ENCODE measurements at regions of chr1 and their contacts with region 1.

Region 1: DNA sequence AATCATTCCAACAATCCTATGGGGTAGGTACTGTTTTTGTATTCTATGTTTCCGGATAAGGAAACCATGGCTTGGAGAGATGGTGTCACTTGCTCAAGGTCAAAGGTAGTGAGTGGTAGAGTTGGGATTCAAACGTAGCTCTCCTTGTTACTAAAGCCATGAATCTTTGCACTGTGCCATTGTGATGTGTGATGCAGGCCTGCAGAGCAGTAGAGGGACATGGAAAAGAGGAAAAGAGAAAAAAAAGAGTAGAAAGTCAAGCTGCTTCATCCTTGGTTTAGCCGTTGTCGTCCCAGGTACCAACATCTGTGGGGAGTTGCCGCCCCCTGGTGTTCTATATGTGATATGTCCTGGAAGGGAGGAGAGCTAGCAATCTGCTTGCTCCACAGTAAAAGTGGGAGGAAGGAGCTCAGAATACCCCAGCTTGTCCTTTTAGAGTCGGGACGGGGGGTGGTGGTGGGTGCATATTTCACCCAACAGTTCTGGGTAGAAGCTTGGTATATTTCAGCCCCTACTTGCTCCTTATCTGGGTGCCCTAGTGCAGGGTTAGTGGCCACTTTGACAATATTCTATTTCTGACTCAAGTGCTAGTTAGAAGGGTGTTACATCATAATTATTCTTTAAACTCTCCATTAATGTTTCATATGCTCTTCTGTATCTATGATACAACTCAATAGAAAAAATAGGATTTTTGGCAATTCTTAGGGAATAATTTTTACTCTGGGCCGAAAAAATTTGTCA is 98.4 kb downstream of the EBNA1BP2 start:
- DNase-seq: peak; percentile 79 to 80
- H3K4me3 ChIP-seq: no peak overlapping the region
- H3K4me3 Mint-ChIP-seq: no peak overlapping the region
- H3K27ac Mint-ChIP-seq: no peak overlapping the region
- H3K4me1 ChIP-seq: peaks cover 52% of the 10 kb centered on the region
- H3K4me1 Mint-ChIP-seq: peaks cover 36% of the 10 kb centered on the region
- H3K27me3 ChIP-seq: no peaks in the 10 kb centered on the region
- H3K27me3 Mint-ChIP-seq: no peaks in the 10 kb centered on the region
- CTCF ChIP-seq: peak; percentile 63 to 83

Region 2: DNA sequence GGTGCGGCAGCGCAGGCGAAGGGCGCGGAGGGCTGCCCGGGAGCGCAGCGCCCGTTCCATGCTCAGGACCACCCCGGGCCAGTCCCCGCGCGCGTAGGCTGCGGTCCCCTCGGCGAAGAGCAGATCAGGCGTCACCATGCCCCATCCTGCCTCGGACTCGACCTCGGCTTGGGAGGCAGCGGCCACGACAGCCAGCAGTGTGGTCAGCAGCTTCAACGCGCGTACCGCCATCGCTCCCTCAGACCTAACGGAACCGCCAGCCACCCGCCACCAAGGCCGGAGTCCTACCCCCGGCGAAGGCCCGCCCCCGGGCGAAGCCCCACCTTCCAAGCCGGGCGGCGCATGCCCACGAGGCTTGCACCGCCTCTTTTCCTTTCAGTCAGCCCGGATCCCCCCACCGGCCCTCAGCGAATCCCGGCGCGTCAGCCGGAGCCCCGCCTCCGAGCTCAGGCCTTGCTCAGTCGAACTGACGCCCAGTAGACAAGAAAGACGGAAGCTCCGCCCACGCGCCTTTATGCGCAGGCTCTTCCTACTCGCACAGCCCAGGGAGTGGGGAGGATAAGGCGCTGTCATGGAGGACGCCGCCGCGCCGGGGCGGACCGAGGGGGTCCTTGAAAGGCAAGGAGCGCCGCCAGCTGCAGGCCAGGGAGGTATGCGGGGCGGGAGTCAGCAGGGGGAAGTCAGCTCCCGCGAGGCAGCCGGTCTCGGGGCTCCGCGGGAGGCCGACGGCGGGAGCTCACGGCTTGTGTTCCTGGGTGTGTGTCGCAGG is 306.7 kb before region 1 on chr1 and contains the starts of genes C1orf50 and P3H1:
- CTCF ChIA-PET with region 1: interaction called, 19 read pairs
- POLR2A ChIA-PET with region 1: no interaction called
- intact Hi-C with region 1: no loop called
- DNase-seq: peak; percentile 98 to 99
- H3K4me3 ChIP-seq: peak within 1 kb of the TSS; percentile 90
- H3K4me3 Mint-ChIP-seq: no peak within 1 kb of the TSS
- H3K27ac Mint-ChIP-seq: peak within 1 kb of the TSS; percentile 80
- H3K4me1 ChIP-seq: peaks cover 13% of the 10 kb centered on the region
- H3K4me1 Mint-ChIP-seq: no peaks in the 10 kb centered on the region
- H3K27me3 ChIP-seq: no peaks in the 10 kb centered on the region
- H3K27me3 Mint-ChIP-seq: no peaks in the 10 kb centered on the region
- CTCF ChIP-seq: no peak
- total RNA-seq, gene C1orf50: 6.1 and 6.3 TPM in 2 replicates
- total RNA-seq, gene P3H1: 20.5 and 21.2 TPM in 2 replicates

Region 3: DNA sequence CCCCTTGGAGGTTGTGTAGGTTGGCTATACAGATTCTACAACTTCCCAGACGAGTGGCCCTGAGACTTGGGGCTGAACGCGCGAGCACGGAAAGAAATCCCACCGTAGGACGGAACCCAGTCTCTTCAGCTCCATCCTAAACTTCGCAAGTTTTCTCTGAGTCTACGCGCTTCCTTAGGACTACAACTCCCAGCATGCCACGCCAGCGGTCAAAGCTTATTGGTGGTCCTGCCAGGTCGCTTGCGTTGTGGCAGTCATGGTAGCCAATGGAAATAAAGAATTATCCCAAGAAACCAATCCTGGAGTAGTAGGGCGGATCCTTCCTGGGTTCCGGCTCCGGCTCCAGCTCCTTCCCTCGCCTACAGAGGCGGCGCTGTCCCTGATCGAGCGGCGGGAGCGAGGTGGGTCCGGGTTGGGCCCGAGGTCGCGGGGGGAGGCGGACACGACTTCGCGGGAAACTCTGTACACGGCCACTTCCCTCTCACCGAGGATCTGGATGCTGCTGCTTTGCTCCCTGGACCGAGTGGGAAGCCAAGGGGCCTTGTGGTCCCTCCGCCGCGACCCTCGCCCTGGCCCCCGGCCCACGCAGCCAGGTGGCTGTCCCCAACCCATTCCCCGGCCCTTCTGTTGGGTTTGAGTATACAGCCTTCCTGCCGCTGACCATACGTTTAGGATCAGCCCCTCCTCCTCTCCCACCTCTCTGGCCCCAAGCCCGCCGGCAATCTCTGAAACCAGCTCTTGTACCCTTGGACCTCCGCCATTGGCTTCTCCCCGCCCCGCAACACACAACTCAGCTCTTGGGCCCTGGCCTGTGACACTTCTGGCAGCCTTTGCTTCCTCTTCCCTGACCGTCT is 227.2 kb before region 1 on chr1 and contains the start of gene ZNF691:
- CTCF ChIA-PET with region 1: interaction called, 19 read pairs
- POLR2A ChIA-PET with region 1: no interaction called
- intact Hi-C with region 1: no loop called
- DNase-seq: peak; percentile 90 to 93
- H3K4me3 ChIP-seq: peak within 1 kb of the TSS; percentile 75
- H3K4me3 Mint-ChIP-seq: peak within 1 kb of the TSS; percentile 100
- H3K27ac Mint-ChIP-seq: peak within 1 kb of the TSS; percentile 94
- H3K4me1 ChIP-seq: no peaks in the 10 kb centered on the region; the same call in 1 of the 2 replicates
- H3K4me1 Mint-ChIP-seq: peaks cover 10% of the 10 kb centered on the region
- H3K27me3 ChIP-seq: no peaks in the 10 kb centered on the region
- H3K27me3 Mint-ChIP-seq: no peaks in the 10 kb centered on the region
- CTCF ChIP-seq: peak in 1 of 2 experiments; percentile 44
- total RNA-seq, gene ZNF691: 6.2 and 7.8 TPM in 2 replicates

Region 4: GRCh38 chr1:42924082-42924850 is 149.4 kb before region 1 on chr1:
- CTCF ChIA-PET with region 1: interaction called, 34 read pairs
- POLR2A ChIA-PET with region 1: interaction called, 3 read pairs
- intact Hi-C with region 1: loop called (anchors 1 kb)
- DNase-seq: peak; percentile 67 to 80
- H3K4me3 ChIP-seq: no peak overlapping the region
- H3K4me3 Mint-ChIP-seq: peak overlapping the region; percentile 51
- H3K27ac Mint-ChIP-seq: peak overlapping the region; percentile 58
- H3K4me1 ChIP-seq: peaks cover 12% of the 10 kb centered on the region
- H3K4me1 Mint-ChIP-seq: peaks cover 40% of the 10 kb centered on the region
- H3K27me3 ChIP-seq: no peaks in the 10 kb centered on the region
- H3K27me3 Mint-ChIP-seq: no peaks in the 10 kb centered on the region
- CTCF ChIP-seq: no peak

Region 5: DNA sequence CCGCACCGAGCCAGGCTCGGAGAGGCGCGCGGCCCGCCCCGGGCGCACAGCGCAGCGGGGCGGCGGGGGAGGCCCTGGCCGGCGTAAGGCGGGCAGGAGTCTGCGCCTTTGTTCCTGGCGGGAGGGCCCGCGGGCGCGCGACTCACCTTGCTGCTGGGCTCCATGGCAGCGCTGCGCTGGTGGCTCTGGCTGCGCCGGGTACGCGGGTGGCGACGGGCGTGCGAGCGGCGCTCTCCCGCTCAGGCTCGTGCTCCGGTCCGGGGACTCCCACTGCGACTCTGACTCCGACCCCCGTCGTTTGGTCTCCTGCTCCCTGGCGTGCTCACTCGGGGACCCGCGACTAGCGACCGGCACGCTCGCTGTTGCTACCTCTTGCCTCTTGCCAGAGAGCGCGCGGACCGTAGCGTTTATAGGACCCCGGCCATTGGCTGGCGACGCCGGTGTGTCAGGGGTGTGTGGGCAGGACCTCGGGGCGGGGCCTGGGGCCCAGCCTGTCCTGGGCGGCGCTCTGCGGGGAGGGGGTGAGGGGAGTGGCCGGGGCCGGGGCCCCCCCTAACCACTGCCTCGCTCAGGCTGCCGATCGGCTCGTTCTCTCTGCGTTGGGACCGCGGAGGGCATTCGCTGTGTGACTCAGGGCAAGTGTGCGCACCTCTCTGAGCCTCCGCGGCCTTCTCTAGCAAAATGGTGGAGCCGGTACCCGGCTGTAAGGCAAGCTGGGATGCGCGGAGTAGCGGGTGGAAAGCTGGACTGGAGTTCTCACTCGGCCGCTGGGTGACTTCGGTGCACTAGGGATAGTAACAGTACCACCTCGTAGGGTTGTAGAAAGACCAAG is 115.0 kb before region 1 on chr1 and contains the start of gene SLC2A1:
- CTCF ChIA-PET with region 1: interaction called, 19 read pairs
- POLR2A ChIA-PET with region 1: interaction called, 3 read pairs
- intact Hi-C with region 1: loop called (anchors 2 kb)
- DNase-seq: peak; percentile 94 to 96
- H3K4me3 ChIP-seq: peak within 1 kb of the TSS; percentile 95
- H3K4me3 Mint-ChIP-seq: peak within 1 kb of the TSS; percentile 93
- H3K27ac Mint-ChIP-seq: peak within 1 kb of the TSS; percentile 93
- H3K4me1 ChIP-seq: peaks cover 54% of the 10 kb centered on the region
- H3K4me1 Mint-ChIP-seq: peaks cover 41% of the 10 kb centered on the region
- H3K27me3 ChIP-seq: no peaks in the 10 kb centered on the region
- H3K27me3 Mint-ChIP-seq: no peaks in the 10 kb centered on the region
- CTCF ChIP-seq: no peak
- total RNA-seq, gene SLC2A1: 422 and 437 TPM in 2 replicates

Region 6: GRCh38 chr1:43008115-43009060 is 65.3 kb before region 1 on chr1:
- CTCF ChIA-PET with region 1: interaction called, 9 read pairs
- POLR2A ChIA-PET with region 1: no interaction called
- intact Hi-C with region 1: loop called (anchors 1 kb)
- DNase-seq: peak; percentile 96 to 99
- H3K4me3 ChIP-seq: peak overlapping the region; percentile 19
- H3K4me3 Mint-ChIP-seq: peak overlapping the region; percentile 71
- H3K27ac Mint-ChIP-seq: peak overlapping the region; percentile 99
- H3K4me1 ChIP-seq: peaks cover 86% of the 10 kb centered on the region
- H3K4me1 Mint-ChIP-seq: peaks cover 33% of the 10 kb centered on the region
- H3K27me3 ChIP-seq: no peaks in the 10 kb centered on the region
- H3K27me3 Mint-ChIP-seq: no peaks in the 10 kb centered on the region
- CTCF ChIP-seq: peak in 1 of 2 experiments; percentile 29

Region 7: DNA sequence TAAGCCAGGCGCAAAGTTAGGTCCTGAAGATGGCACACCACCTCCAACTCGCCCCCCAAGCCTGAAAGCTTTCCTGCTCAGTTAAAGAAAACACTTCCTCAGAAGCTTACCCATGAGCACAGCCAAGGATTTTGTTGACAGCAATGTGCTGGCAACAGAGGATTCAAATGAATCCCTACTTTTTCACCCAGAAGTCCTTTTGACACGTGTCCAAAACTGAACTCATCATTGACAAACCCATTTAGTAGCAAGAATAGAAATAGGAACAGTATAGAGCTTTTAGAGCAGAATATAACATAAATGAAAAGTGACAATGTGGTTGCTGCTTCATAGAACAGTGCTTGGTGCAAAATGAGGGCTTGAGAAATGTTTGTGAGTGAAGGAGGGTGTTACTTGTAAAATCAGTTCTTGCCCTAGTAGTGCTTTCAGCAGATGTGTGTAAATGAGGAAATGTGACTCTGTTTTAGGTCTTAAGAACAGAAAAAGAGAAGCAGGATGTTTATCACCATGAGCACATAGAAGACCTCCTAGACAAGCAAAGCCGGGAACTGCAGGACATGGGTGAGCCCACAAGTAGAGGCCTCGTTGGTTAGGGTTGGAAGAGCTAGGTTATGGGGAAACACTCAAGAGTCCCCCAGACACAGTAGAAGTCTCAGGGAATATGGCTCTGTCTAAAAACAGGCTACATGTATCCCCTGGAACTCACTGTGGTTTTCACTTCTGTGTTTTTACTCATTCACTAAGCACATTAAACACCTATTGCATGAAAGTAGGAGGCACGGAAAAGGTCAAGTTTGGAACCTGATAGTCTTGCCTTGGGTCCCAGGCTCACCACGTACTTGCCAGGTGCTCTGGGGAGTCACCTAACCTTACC is 147.5 kb after region 1 on chr1:
- CTCF ChIA-PET with region 1: no interaction called
- POLR2A ChIA-PET with region 1: no interaction called
- intact Hi-C with region 1: no loop called
- DNase-seq: no peak
- H3K4me3 ChIP-seq: no peak overlapping the region
- H3K4me3 Mint-ChIP-seq: no peak overlapping the region
- H3K27ac Mint-ChIP-seq: no peak overlapping the region
- H3K4me1 ChIP-seq: no peaks in the 10 kb centered on the region
- H3K4me1 Mint-ChIP-seq: no peaks in the 10 kb centered on the region
- H3K27me3 ChIP-seq: no peaks in the 10 kb centered on the region
- H3K27me3 Mint-ChIP-seq: no peaks in the 10 kb centered on the region
- CTCF ChIP-seq: no peak

Region 8: GRCh38 chr1:43358746-43359693 is 285.4 kb after region 1 on chr1 and contains the start of gene CDC20:
- CTCF ChIA-PET with region 1: no interaction called
- POLR2A ChIA-PET with region 1: no interaction called
- intact Hi-C with region 1: no loop called
- DNase-seq: peak; percentile 97 to 98
- H3K4me3 ChIP-seq: peak within 1 kb of the TSS; percentile 96
- H3K4me3 Mint-ChIP-seq: peak within 1 kb of the TSS; percentile 93
- H3K27ac Mint-ChIP-seq: peak within 1 kb of the TSS; percentile 97
- H3K4me1 ChIP-seq: peaks cover 24% of the 10 kb centered on the region
- H3K4me1 Mint-ChIP-seq: peaks cover 27% of the 10 kb centered on the region
- H3K27me3 ChIP-seq: no peaks in the 10 kb centered on the region
- H3K27me3 Mint-ChIP-seq: no peaks in the 10 kb centered on the region
- CTCF ChIP-seq: no peak
- total RNA-seq, gene CDC20: 123 and 125 TPM in 2 replicates